ENCODE measurements at regions of chr1 and their contacts with region 1.

Region 1: DNA sequence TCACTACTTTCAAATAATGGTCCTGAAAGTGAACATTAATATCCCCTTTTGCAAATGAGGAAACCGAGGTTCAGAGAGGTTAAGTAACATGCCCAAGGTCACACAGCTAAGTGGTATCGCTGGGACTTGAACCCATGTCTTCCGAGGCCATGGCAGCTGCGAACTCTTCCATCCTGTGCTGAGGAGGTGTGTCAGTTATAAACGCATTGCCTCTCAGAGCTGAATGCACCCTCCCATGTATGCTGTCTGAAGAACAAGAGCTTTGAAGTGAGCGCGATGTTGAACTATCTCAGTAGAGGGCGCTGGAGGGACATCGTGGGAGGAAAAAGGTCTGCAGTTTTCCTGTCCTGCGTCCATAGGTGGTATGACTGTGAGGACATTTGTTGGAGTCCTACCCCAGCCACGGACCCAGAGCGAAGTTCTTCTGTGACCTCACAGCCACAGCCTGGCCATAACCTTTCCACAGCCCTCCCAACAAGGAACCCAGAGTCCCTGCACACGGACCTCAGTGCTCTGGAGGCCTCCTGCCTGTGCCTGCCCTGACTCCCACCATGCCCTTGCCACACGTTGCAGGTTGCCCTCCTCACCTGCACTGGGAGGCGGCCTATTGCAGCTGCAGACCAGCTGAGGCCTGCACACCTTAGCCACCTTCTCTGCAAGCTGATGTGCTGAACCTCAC is 7.5 kb downstream of the MYOC start:
- DNase-seq: peak; percentile 91
- ATAC-seq: peak; percentile 74
- H3K4me3 Mint-ChIP-seq: peak overlapping the region; percentile 32; the same call in 1 of the 2 replicates
- H3K27ac Mint-ChIP-seq: no peak overlapping the region
- H3K4me1 Mint-ChIP-seq: peaks cover 39% of the 10 kb centered on the region
- H3K27me3 Mint-ChIP-seq: no peaks in the 10 kb centered on the region
- CTCF ChIP-seq: peak; percentile 62

Region 2: DNA sequence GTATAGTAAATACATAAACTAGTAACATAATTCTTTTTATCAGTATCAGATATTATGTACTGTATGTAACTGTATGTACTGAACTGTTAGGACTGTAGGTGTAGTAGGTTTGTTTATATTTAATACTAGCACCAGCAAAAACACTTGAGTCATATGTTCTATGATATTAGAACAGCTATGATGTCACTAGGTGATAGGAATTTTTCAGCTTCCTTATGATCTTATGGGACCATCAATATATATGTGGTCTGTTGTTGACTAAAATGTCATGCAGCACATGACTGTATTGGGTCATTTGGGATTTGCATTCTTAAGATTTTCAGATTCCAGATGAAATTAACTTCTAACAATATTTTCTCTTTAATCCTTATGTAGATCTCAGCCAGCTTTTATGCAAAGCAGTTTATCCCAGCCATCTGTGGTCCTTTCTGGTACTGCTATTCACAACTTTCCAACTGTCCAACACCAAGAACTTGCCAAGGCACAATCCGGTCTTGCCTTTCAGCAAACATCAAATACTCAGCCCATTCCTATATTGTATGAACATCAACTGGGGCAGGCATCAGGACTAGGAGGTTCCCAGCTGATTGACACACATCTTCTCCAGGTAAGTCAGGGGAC is 61.3 kb before region 1 on chr1:
- CTCF ChIA-PET with region 1: no interaction called
- POLR2A ChIA-PET with region 1: no interaction called
- DNase-seq: no peak
- ATAC-seq: no peak
- H3K4me3 Mint-ChIP-seq: no peak overlapping the region
- H3K27ac Mint-ChIP-seq: no peak overlapping the region
- H3K4me1 Mint-ChIP-seq: no peaks in the 10 kb centered on the region
- H3K27me3 Mint-ChIP-seq: no peaks in the 10 kb centered on the region
- CTCF ChIP-seq: no peak

Region 3: GRCh38 chr1:171597203-171597602 is 47.7 kb before region 1 on chr1:
- CTCF ChIA-PET with region 1: interaction called, 15 read pairs
- POLR2A ChIA-PET with region 1: no interaction called
- DNase-seq: no peak
- ATAC-seq: no peak
- H3K4me3 Mint-ChIP-seq: no peak overlapping the region
- H3K27ac Mint-ChIP-seq: no peak overlapping the region
- H3K4me1 Mint-ChIP-seq: peaks cover 10% of the 10 kb centered on the region
- H3K27me3 Mint-ChIP-seq: no peaks in the 10 kb centered on the region
- CTCF ChIP-seq: no peak

Region 4: GRCh38 chr1:171654942-171655745 is 10.2 kb after region 1 on chr1:
- CTCF ChIA-PET with region 1: interaction called, 121 read pairs
- POLR2A ChIA-PET with region 1: interaction called, 3 read pairs
- DNase-seq: peak; percentile 92
- ATAC-seq: peak; percentile 97
- H3K4me3 Mint-ChIP-seq: peak overlapping the region; percentile 51
- H3K27ac Mint-ChIP-seq: no peak overlapping the region
- H3K4me1 Mint-ChIP-seq: peaks cover 16% of the 10 kb centered on the region
- H3K27me3 Mint-ChIP-seq: no peaks in the 10 kb centered on the region
- CTCF ChIP-seq: peak; percentile 70

Region 5: GRCh38 chr1:171741872-171742576 is 97.1 kb after region 1 on chr1 and contains the start of gene VAMP4:
- CTCF ChIA-PET with region 1: interaction called, 35 read pairs
- POLR2A ChIA-PET with region 1: interaction called, 5 read pairs
- DNase-seq: peak; percentile 92
- ATAC-seq: peak; percentile 92
- H3K4me3 Mint-ChIP-seq: peak within 1 kb of the TSS; percentile 100
- H3K27ac Mint-ChIP-seq: peak within 1 kb of the TSS; percentile 99
- H3K4me1 Mint-ChIP-seq: peaks cover 41% of the 10 kb centered on the region
- H3K27me3 Mint-ChIP-seq: no peaks in the 10 kb centered on the region; the same call in 1 of the 2 replicates
- CTCF ChIP-seq: no peak
- total RNA-seq, gene VAMP4: 8.9 to 11.4 TPM (median 9.4 TPM) in 3 replicates

Region 6: DNA sequence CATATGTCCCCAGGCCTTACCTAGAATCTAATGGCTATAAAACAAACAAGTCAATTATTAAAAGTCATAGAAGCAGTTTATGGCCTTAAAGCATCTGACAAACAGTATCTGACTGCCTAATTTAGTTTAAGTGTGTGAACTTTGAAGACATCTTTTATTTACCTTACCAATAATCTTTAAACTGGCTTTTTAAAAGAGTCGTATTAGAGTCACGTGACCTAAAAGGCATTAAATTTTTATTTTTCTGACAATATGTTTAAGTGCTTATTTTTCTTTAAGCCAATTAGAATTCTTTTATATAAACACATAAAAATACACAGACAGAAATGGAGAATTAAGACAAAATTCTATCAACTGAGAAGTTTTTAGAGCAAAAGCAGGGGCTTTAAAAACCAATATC is 115.2 kb after region 1 on chr1:
- CTCF ChIA-PET with region 1: no interaction called
- POLR2A ChIA-PET with region 1: no interaction called
- DNase-seq: no peak
- ATAC-seq: no peak
- H3K4me3 Mint-ChIP-seq: no peak overlapping the region
- H3K27ac Mint-ChIP-seq: no peak overlapping the region
- H3K4me1 Mint-ChIP-seq: no peaks in the 10 kb centered on the region
- H3K27me3 Mint-ChIP-seq: peaks cover 3% of the 10 kb centered on the region
- CTCF ChIP-seq: no peak

Region 7: GRCh38 chr1:171841050-171841940 is 196.4 kb after region 1 on chr1 and contains the start of gene DNM3:
- CTCF ChIA-PET with region 1: interaction called, 11 read pairs
- POLR2A ChIA-PET with region 1: no interaction called
- DNase-seq: peak; percentile 82
- ATAC-seq: peak; percentile 88
- H3K4me3 Mint-ChIP-seq: peak within 1 kb of the TSS; percentile 87
- H3K27ac Mint-ChIP-seq: peak within 1 kb of the TSS; percentile 74; the same call in 1 of the 2 replicates
- H3K4me1 Mint-ChIP-seq: peaks cover 19% of the 10 kb centered on the region
- H3K27me3 Mint-ChIP-seq: peaks cover 45% of the 10 kb centered on the region
- CTCF ChIP-seq: no peak
- total RNA-seq, gene DNM3: 0.99 to 1.9 TPM (median 1.6 TPM) in 3 replicates